ENCODE measurements at regions of chr16 and their contacts with region 1.

Region 1: DNA sequence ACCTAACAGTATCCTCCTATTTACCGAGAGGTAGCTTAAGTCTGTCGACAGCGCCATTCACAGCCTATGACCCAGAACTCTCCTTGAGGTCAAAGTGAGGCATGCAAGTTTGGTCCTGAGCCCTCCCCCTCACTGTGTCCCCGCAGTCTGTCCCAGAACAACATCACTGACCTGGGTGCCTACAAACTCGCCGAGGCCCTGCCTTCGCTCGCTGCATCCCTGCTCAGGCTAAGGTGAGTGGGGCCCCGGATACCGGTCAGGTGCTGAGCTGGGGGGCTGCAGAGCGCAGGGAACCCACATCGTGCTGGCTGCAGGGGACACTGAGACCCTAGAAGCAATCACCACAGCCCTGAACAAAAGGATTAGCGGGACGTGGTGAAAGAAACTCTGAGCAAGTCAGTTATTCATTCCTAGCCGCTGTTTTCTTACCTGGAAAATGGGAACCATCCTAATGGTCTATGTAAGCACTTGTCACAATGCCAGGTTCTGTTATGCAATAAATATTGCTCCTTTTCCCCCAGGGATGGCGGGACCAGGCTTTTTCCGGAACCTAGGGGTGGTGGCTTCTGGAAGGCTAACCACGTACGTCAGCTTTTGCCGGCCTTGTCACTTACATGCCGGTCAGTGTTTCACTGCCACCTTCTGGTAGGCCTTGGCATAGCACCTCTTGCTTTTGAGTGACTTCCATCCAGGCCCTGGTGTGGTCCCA is 23.8 kb downstream of the DEXI start:
- DNase-seq: peak; percentile 86 to 95 (median 92)
- ATAC-seq: peak; percentile 82 to 96 (median 94)
- H3K4me3 ChIP-seq: peak overlapping the region in 1 of 4 donors; percentile 24
- H3K27ac ChIP-seq: peak overlapping the region in 2 of 4 donors; percentile 39 to 52
- H3K4me1 ChIP-seq: no peaks in the 10 kb centered on the region
- H3K27me3 ChIP-seq: no peaks in the 10 kb centered on the region
- CTCF ChIP-seq: peak; percentile 89 to 92 (median 91)

Region 2: DNA sequence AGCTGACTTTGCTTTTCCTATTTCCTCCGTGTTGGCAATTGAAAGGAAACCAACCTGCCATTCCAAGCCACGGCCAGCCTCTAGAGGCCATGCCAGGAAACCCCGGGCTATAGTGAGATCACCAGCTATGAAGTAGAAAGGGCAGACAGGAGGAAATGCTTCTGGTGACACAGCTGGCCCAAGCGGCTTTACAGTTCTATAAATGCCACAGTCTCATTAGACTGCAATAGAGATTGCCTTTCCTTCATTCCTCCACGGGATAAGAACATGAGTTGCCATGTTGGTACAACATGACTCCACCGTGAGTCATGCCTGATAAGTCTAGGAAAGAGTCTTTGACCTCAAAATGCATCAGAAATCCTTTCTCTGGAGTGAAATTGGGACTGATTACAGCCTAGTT is 1121.1 kb before region 1 on chr16:
- intact Hi-C with region 1: no loop called
- DNase-seq: no peak
- ATAC-seq: peak in 1 of 4 donors; percentile 46
- H3K4me3 ChIP-seq: no peak overlapping the region
- H3K27ac ChIP-seq: no peak overlapping the region
- H3K4me1 ChIP-seq: no peaks in the 10 kb centered on the region
- H3K27me3 ChIP-seq: no peaks in the 10 kb centered on the region
- CTCF ChIP-seq: no peak

Region 3: DNA sequence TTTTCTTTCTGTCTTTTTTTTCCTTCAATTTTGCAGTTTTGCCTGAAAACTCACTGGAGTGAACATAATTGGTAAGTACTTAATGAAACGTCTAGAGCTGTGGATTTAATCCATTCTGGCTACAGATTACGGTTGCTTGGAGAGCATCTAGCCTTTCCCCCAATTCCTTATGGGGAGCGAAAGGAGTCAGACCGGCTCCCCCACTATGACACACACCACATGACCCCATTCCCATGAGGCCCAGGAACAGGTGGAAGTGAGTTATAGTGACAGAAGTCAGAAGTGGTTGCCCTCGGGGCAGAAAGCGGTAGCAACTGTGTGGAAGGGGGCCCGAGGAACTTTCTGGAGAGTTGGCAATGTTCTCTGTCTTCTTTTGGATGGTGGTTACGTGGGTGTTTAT is 379.2 kb before region 1 on chr16:
- intact Hi-C with region 1: loop called in 1 of 3 experiments (anchors 10 kb)
- DNase-seq: no peak
- ATAC-seq: no peak
- H3K4me3 ChIP-seq: no peak overlapping the region
- H3K27ac ChIP-seq: no peak overlapping the region
- H3K4me1 ChIP-seq: no peaks in the 10 kb centered on the region
- H3K27me3 ChIP-seq: no peaks in the 10 kb centered on the region
- CTCF ChIP-seq: no peak

Region 4: GRCh38 chr16:10752843-10753523 is 165.5 kb before region 1 on chr16:
- intact Hi-C with region 1: loop called in 1 of 3 experiments (anchors 10 kb)
- DNase-seq: peak in 1 of 6 donors; percentile 60
- ATAC-seq: peak in 2 of 4 donors; percentile 34 to 73
- H3K4me3 ChIP-seq: no peak overlapping the region
- H3K27ac ChIP-seq: no peak overlapping the region
- H3K4me1 ChIP-seq: no peaks in the 10 kb centered on the region
- H3K27me3 ChIP-seq: no peaks in the 10 kb centered on the region
- CTCF ChIP-seq: no peak

Region 5: DNA sequence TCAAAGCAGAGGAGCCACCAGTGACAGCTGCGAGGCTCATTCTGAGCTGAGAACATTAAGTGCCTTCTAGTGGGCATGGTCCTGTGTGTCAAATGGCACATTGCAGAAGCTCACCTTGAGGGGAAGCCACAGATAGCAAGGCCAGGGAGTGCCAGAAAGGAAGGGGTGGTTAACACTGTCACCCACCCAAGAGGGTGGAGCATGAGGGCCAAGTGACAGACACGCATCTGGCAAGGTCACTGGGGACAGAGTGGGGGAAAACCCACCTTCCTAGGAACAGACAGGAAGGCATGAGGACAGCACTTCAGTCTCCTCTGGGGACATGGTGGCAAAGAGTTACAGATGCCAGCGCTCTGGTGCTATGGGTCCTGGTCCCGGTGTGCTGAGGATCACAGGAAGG is 152.7 kb before region 1 on chr16:
- intact Hi-C with region 1: loop called in 1 of 3 experiments (anchors 10 kb)
- DNase-seq: no peak
- ATAC-seq: no peak
- H3K4me3 ChIP-seq: no peak overlapping the region
- H3K27ac ChIP-seq: no peak overlapping the region
- H3K4me1 ChIP-seq: no peaks in the 10 kb centered on the region
- H3K27me3 ChIP-seq: no peaks in the 10 kb centered on the region
- CTCF ChIP-seq: no peak

Measured in pancreas (tissue), 10 donors.